Ascending aorta (tissue), 2 donors: ENCODE measurements at regions of chr16 and their contacts with region 1.

Region 1: DNA sequence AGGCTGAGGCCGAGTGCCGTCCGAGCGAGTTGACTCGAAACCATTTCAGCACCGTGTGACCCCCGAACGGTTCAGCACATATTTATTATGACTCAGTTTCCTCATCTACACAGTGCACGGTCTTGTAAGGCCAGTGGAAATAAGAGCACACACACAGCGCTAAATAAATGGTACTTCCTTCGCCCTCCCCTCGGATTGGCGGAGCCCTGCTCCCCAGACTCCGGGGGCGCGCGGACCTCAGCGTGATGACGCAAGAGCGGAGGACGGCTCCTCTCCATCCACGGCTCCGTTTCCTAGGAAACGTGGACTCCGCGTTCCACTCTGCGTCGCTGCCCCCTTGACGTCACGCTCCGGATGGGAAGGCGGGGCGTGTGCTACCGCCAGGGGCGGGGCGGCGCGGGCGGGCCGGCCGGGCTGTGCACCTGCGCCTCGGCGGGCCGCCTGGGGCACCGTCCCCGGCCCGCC is at the start of gene PARD6A:
- DNase-seq: peak; percentile 87 to 98
- H3K4me3 ChIP-seq: peak within 1 kb of the TSS; percentile 62 to 97
- H3K27ac ChIP-seq: peak within 1 kb of the TSS; percentile 86 to 90
- H3K4me1 ChIP-seq: peaks cover 11 to 17% of the 10 kb centered on the region in 2 donors
- H3K27me3 ChIP-seq: no peaks in the 10 kb centered on the region
- CTCF ChIP-seq: no peak
- total RNA-seq, gene PARD6A: 8.4 TPM

Region 2: DNA sequence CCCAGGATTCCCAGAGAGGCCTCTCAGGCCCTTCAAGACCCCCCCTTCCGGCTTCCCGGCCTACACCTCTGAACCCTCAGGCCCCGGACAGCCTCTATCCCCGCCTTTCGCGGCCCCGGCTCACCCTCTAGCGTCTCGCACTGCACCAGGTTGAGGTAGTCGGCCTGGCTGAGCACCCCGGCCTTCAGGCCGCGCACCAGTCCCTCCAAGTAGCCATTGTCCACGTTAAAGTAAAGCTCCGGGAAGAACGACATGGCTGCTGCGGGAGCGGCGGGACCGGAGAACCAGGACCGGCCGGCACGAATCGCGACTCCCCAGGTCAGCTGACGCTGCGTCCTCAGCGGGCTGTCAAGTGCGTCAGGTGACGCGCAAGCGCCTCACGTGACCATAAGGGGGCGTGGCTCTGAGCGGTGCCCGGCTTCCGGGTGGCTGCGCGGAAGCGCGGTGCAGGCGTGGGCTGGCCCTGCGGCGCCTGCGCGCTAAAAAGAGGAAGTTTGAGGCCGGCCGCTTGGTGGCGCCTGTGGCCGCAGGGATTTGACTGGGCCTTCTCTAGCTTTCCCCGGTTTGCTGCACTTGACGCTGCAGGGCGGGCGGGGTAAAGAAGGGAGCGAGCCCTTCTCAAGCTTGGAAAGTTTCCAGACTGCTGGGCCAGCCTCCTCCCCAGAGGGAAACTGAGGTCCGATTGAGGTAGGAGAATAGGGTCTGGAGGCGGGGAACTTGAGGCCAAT is 179.6 kb before region 1 on chr16 and contains the start of gene ATP6V0D1:
- intact Hi-C with region 1: loop called (anchors 1 kb)
- DNase-seq: peak; percentile 88 to 99
- H3K4me3 ChIP-seq: peak within 1 kb of the TSS; percentile 56 to 73
- H3K27ac ChIP-seq: peak within 1 kb of the TSS; percentile 74 to 80
- H3K4me1 ChIP-seq: peaks cover 4 to 24% of the 10 kb centered on the region in 2 donors
- H3K27me3 ChIP-seq: no peaks in the 10 kb centered on the region
- CTCF ChIP-seq: peak; percentile 91 to 94 (median 93)
- total RNA-seq, gene ATP6V0D1: 64.3 TPM

Region 3: GRCh38 chr16:67530013-67530939 is 130.3 kb before region 1 on chr16:
- intact Hi-C with region 1: loop called (anchors 1 kb)
- DNase-seq: peak; percentile 69 to 94
- H3K4me3 ChIP-seq: peak overlapping the region; percentile 77 to 97
- H3K27ac ChIP-seq: peak overlapping the region; percentile 93 to 99
- H3K4me1 ChIP-seq: peaks cover 7 to 9% of the 10 kb centered on the region in 2 donors
- H3K27me3 ChIP-seq: no peaks in the 10 kb centered on the region
- CTCF ChIP-seq: no peak

Region 4: GRCh38 chr16:67719048-67719777 is 58.6 kb after region 1 on chr16 and contains the start of gene GFOD2:
- intact Hi-C with region 1: loop called (anchors 2 kb)
- DNase-seq: peak; percentile 78 to 98
- H3K4me3 ChIP-seq: peak within 1 kb of the TSS; percentile 87 to 99
- H3K27ac ChIP-seq: peak within 1 kb of the TSS; percentile 87 to 94
- H3K4me1 ChIP-seq: peaks cover 0 to 12% of the 10 kb centered on the region in 2 donors
- H3K27me3 ChIP-seq: no peaks in the 10 kb centered on the region
- CTCF ChIP-seq: no peak
- total RNA-seq, gene GFOD2: 43.5 TPM